Activated B cell treated with CpG ODN at 0.5 μM for 24 hours (primary cell): ENCODE measurements at regions of chr12 and their contacts with region 1.

Region 1: DNA sequence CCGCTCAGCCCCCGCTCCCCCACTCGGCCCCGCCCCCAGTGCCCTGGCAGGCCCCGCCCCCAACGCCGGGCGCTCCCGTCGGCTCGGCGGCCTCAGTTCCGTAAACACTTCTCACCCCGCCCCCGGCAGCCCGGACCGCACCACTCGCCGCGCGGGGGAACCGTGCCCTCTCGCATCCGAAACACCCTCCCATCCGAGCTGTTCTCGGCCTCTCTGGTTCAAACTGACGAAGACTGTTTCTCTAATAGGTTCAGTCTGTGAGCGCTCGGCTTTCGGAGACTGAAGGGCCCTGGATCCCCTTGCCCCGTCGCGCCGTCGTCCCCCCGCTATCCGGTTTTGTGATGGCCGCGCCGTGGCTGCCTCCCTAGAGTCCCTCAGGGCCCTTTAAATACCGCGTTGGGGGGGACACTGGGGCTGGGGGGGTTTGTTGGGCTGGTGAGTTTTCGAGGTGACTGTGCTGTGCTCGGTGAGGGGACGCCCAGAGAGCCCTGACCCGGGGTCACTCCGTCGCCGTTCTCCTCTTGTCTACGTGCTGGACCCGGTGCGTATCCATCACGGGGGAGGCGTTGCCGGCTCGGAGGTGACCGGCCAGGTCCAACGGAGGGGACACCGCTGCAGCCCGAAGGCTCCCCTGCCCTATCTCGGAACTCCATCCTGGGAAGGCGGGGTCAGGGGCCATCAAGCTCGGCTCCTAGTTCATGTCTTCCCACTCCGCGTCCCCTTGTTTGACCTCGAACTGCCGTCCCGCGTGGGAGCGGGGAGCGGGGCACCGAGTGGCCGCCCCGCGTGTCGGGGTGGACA is at the start of gene TCP11L2:
- DNase-seq: peak; percentile 92
- ATAC-seq: peak; percentile 62
- H3K4me3 Mint-ChIP-seq: peak within 1 kb of the TSS; percentile 97
- H3K27ac Mint-ChIP-seq: peak within 1 kb of the TSS; percentile 100
- H3K4me1 Mint-ChIP-seq: peaks cover 71% of the 10 kb centered on the region
- H3K27me3 Mint-ChIP-seq: no peaks in the 10 kb centered on the region
- CTCF ChIP-seq: no peak
- total RNA-seq, gene TCP11L2: 48.0 and 52.5 TPM in 2 replicates

Region 2: GRCh38 chr12:105235732-105236476 is 1066.7 kb before region 1 on chr12 and contains the start of gene APPL2:
- CTCF ChIA-PET with region 1: no interaction called
- POLR2A ChIA-PET with region 1: no interaction called
- intact Hi-C with region 1: loop called (anchors 5 kb)
- DNase-seq: peak; percentile 79
- ATAC-seq: peak; percentile 82
- H3K4me3 Mint-ChIP-seq: peak within 1 kb of the TSS; percentile 88
- H3K27ac Mint-ChIP-seq: peak within 1 kb of the TSS; percentile 91
- H3K4me1 Mint-ChIP-seq: peaks cover 39% of the 10 kb centered on the region
- H3K27me3 Mint-ChIP-seq: no peaks in the 10 kb centered on the region
- CTCF ChIP-seq: no peak
- total RNA-seq, gene APPL2: 22.0 and 30.7 TPM in 2 replicates

Region 3: GRCh38 chr12:106223485-106224354 is 78.9 kb before region 1 on chr12:
- CTCF ChIA-PET with region 1: interaction called, 12 read pairs
- POLR2A ChIA-PET with region 1: interaction called, 19 read pairs
- intact Hi-C with region 1: loop called (anchors 5 kb)
- DNase-seq: peak; percentile 49
- ATAC-seq: peak; percentile 74
- H3K4me3 Mint-ChIP-seq: no peak overlapping the region
- H3K27ac Mint-ChIP-seq: no peak overlapping the region
- H3K4me1 Mint-ChIP-seq: peaks cover 18% of the 10 kb centered on the region
- H3K27me3 Mint-ChIP-seq: peaks cover 18% of the 10 kb centered on the region
- CTCF ChIP-seq: peak; percentile 70

Region 4: GRCh38 chr12:106276032-106276740 is 26.4 kb before region 1 on chr12:
- CTCF ChIA-PET with region 1: no interaction called
- POLR2A ChIA-PET with region 1: interaction called, 17 read pairs
- intact Hi-C with region 1: loop called (anchors 1 kb)
- DNase-seq: peak; percentile 29
- ATAC-seq: peak; percentile 92
- H3K4me3 Mint-ChIP-seq: peak overlapping the region; percentile 73
- H3K27ac Mint-ChIP-seq: peak overlapping the region; percentile 89
- H3K4me1 Mint-ChIP-seq: peaks cover 41% of the 10 kb centered on the region
- H3K27me3 Mint-ChIP-seq: peaks cover 3% of the 10 kb centered on the region
- CTCF ChIP-seq: no peak

Region 5: DNA sequence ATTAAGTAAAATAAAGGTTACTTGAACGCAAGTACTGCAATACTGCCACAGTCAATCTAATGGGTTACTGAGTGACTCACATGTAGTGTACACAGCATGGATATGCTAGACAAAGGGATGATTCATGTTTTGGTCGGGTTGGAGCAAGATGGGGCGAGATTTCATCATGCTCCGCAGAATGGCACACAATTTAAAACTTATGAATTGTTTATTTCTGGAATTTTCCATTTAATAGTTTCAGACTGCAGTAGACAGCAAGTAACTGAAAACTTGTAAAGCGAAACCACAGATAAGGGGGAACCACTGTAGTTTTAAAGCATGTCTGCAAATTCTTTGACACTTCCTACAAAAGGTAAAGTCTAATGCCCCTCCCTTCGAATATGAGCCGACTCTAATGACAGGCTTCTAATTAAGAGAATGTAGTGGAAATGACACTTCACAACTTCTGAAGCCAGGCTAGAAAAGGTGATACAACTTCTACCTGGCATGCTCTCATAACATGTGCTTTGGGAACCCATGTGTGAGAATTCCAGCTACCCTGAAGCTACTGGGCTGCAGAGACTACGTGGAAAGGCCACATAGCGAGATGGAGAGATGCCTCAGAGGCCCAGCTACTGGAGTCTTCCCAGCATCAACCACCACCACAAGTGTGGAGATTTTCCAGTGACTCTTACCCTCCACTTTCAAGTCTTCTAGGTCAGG is 14.0 kb before region 1 on chr12:
- CTCF ChIA-PET with region 1: interaction called, 31 read pairs
- POLR2A ChIA-PET with region 1: interaction called, 27 read pairs
- intact Hi-C with region 1: loop called (anchors 1 kb)
- DNase-seq: no peak
- ATAC-seq: peak; percentile 66
- H3K4me3 Mint-ChIP-seq: no peak overlapping the region
- H3K27ac Mint-ChIP-seq: peak overlapping the region; percentile 56
- H3K4me1 Mint-ChIP-seq: peaks cover 42% of the 10 kb centered on the region
- H3K27me3 Mint-ChIP-seq: no peaks in the 10 kb centered on the region
- CTCF ChIP-seq: no peak

Region 6: GRCh38 chr12:106446419-106447092 is 144.0 kb after region 1 on chr12:
- CTCF ChIA-PET with region 1: no interaction called
- POLR2A ChIA-PET with region 1: no interaction called
- intact Hi-C with region 1: no loop called
- DNase-seq: no peak
- ATAC-seq: no peak
- H3K4me3 Mint-ChIP-seq: no peak overlapping the region
- H3K27ac Mint-ChIP-seq: no peak overlapping the region
- H3K4me1 Mint-ChIP-seq: no peaks in the 10 kb centered on the region
- H3K27me3 Mint-ChIP-seq: no peaks in the 10 kb centered on the region
- CTCF ChIP-seq: no peak

Region 7: DNA sequence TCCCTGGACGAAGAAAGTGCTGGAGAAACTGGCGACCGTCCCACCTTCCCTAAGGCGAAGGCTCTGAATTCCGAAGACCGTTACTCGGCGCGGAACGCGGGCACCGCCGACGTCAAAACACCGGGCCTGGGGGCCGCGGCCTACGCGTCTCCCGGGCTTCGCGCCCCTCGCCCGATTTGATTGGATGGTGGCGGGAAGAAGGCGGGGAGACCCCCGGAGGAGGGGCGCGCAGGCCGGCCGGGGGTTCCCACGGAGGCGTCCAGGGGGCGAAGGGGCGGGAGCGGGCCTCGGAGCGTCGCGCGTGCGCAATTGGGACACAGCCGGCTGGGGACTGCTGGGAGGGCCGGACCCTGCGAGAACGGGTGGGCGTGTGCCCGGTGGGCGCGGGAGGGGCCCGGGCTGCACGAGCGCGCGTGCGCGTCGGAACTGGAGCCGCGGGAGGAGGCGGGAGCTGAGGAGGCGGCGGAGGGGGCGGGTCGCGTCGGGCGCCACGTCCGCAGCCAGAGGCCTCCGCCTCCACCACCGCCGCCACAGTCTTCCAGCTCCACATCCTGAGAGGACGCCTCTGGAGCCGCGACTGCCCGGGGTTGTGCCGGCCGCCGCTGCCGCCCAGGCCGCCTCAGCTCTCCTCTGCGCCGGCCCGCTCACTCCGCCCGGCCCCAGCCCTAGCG is 652.9 kb after region 1 on chr12 and contains the start of gene TMEM263:
- CTCF ChIA-PET with region 1: no interaction called
- POLR2A ChIA-PET with region 1: interaction called, 5 read pairs
- intact Hi-C with region 1: loop called (anchors 1 kb)
- DNase-seq: peak; percentile 91
- ATAC-seq: peak; percentile 86
- H3K4me3 Mint-ChIP-seq: peak within 1 kb of the TSS; percentile 96
- H3K27ac Mint-ChIP-seq: peak within 1 kb of the TSS; percentile 84
- H3K4me1 Mint-ChIP-seq: peaks cover 23% of the 10 kb centered on the region
- H3K27me3 Mint-ChIP-seq: no peaks in the 10 kb centered on the region
- CTCF ChIP-seq: no peak
- total RNA-seq, gene TMEM263: 10.5 and 15.1 TPM in 2 replicates